AG04449 (cell line): ENCODE measurements at regions of chr5 and their contacts with region 1.

Region 1: DNA sequence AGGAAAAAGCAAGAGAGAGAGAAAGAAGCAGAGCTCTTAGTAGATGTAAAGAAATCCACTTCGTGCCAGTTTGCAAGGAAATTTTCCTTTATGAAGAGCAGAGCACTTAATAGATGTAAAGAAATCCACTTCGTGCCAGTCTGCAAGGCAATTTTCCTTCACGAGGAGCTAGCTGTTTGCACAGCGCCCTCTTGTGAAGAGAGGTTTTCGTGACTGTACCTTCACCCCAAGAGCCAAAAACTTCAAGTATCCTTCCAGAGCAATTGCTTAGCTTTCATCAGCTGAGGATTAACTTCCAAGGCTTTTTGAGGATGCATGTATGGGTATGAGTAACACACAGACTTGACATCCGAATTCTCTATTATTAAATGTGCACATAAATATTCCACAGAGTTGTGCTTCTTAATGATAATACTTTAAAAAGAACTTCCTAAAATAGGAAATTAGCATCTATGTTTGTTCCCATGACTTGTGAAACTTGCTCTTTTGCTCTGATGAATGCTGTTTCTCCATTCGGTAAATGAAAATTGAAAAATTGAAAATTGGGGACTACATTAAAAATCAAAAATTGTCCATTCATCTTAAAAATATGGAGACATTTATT is 525.6 kb downstream of the PDE4D start:
- DNase-seq: peak; percentile 23
- H3K4me3 ChIP-seq: no peak overlapping the region
- CTCF ChIP-seq: peak; percentile 79

Region 2: DNA sequence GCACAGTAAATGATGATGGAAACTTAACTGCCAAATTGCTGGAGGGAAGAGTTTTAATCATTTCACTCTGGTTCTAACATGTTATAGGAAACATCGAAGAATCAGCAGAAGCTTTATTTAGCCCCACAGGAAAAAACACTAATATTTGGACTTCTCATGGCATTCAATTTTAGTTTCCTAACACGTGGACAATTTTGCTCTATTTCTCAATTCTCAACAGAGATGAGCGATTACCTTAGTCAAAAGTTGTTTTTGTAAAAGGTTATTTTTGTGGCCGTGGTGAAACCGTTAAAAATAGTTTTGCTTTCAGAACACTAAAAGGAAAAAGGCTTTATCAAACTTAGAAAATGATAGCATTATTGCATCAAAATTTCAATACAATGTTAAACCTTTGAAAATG is 1143.2 kb before region 1 on chr5:
- CTCF ChIA-PET with region 1: no interaction called
- POLR2A ChIA-PET with region 1: no interaction called
- DNase-seq: no peak
- H3K4me3 ChIP-seq: no peak overlapping the region
- CTCF ChIP-seq: no peak

Region 3: GRCh38 chr5:59174248-59174844 is 193.5 kb before region 1 on chr5:
- CTCF ChIA-PET with region 1: interaction called, 17 read pairs
- POLR2A ChIA-PET with region 1: no interaction called
- DNase-seq: peak; percentile 59
- H3K4me3 ChIP-seq: no peak overlapping the region
- CTCF ChIP-seq: peak; percentile 75

Region 4: DNA sequence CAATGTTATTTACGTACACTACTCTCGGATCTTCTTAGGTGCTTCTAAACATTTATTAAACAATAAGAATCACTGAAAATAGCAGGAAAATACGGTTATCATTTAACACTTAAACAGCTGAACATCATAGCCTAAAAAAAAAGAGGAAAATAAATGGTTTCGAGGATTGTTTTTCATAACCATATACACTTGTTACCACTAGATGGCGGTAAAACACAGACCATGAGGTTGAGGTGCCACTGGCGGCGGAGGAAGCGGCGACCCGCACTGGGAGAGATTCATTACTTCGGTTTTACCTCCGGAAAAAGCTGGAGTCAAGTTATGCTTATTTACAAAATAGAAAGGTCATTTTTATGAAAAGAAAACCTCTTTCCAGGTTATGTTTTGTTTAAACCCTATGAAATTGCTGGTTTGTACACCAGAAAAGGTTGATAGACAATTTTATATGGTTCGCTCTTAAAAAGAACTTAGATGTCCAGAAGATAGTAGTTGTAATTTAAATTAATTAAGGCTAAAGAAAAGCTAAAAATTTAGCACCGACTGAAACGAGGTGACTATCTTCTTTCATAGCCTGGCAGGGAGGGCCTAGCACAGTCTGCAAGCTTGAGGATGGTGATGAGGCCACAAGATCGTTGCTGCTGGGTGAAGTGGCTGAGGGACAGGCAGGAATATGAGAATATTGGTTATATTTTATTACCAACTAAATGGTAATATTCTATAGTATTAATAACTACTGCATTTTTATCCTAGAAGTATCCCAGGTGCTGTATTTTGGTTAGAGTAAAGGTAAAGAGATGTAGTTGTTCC is 179.3 kb before region 1 on chr5:
- CTCF ChIA-PET with region 1: interaction called, 367 read pairs
- POLR2A ChIA-PET with region 1: no interaction called
- DNase-seq: no peak
- H3K4me3 ChIP-seq: no peak overlapping the region
- CTCF ChIP-seq: peak; percentile 39

Region 5: GRCh38 chr5:59209758-59210359 is 158.0 kb before region 1 on chr5:
- CTCF ChIA-PET with region 1: interaction called, 29 read pairs
- POLR2A ChIA-PET with region 1: no interaction called
- DNase-seq: no peak
- H3K4me3 ChIP-seq: no peak overlapping the region
- CTCF ChIP-seq: no peak

Region 6: DNA sequence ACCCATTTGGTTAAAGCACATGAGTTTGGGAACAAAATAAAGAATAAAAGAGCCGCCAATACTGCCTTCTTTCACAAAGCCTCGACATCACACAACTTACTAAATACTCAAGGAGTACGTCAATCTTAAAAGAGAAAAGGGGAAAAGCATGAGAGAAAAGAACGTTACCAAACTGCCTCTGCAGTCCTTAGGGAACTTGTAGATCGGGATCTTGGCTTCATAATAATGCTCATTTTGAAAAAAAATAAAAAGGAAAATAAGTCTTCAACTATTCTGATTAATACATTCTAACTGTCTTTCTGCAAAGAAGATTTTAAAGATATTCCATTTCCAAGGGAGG is 92.8 kb before region 1 on chr5:
- CTCF ChIA-PET with region 1: no interaction called
- POLR2A ChIA-PET with region 1: no interaction called
- DNase-seq: no peak
- H3K4me3 ChIP-seq: no peak overlapping the region; the same call in 1 of the 2 replicates
- CTCF ChIP-seq: no peak

Region 7: DNA sequence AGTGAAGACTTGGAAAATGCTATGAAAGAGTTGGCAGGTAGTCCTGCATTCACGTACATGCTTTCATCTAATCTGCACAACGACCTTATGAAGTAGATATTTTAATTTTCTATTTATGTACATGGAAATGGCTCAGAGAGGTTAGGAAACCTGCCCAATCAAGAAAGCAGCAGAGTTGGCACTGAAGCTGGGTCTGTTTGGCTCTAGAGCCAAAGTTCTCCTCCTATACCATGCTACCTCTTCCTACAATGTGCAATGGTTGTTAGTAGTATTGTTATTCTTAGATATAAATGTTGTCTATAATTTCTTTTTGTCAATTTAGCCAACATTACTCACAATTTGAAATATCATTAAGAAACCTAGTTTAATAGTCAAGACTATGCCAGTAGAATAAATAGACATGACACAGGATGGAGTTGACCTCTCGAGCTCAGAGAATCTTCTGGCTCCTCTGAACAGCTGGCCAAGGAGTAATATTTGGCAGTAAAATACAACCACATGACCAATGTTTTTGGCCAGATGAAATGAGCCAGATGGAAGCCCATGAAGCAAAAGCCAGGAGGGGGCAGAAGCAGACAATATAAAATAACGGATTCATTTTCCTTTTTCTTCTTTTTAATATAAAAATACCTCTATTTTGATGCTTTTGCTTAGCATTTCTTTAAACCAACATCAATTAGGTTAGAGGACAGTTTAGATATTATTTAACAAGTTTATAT is 16.7 kb before region 1 on chr5:
- CTCF ChIA-PET with region 1: interaction called, 32 read pairs
- POLR2A ChIA-PET with region 1: no interaction called
- DNase-seq: no peak
- H3K4me3 ChIP-seq: no peak overlapping the region
- CTCF ChIP-seq: no peak

Region 8: GRCh38 chr5:59380350-59380951 is 12.6 kb after region 1 on chr5:
- CTCF ChIA-PET with region 1: interaction called, 60 read pairs
- POLR2A ChIA-PET with region 1: no interaction called
- DNase-seq: peak; percentile 52
- H3K4me3 ChIP-seq: no peak overlapping the region
- CTCF ChIP-seq: peak; percentile 19